ENCODE measurements at regions of chr15 and their contacts with region 1.

Region 1: GRCh38 chr15:32099956-32100684 is 69.8 kb downstream of the CHRNA7 start:
- DNase-seq: no peak
- H3K4me3 ChIP-seq: no peak overlapping the region
- H3K4me1 ChIP-seq: no peaks in the 10 kb centered on the region
- H3K27me3 ChIP-seq: no peaks in the 10 kb centered on the region

Region 2: DNA sequence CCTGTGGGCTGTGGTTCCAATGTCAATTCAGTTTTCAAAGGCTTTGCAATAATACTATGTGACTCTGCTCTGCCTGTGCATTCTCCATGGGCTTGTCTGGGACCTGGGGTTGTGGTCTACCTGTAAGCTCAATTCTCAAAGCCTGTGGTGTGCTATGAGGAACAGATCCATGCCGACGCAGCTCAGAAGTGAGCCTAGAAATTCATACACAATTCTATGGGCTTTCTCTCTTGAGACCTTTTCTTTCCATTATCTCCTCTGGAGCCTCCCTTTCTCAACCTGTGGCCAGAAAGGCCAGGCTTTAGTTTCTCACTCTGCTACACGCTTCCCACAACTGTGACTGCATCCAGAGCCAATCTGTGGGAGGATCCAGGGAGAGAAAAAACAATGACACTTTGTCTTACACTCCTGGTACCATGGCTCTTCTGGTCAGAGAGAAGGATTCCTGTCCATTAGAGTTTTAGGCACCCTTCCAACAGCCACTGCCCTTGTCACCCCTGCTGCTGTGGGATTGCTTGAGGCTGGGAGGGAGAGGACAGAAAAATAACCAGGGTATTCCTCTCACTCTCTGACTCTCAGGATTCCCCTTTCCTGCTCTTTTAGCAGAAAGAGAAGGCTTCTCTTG is 807.6 kb before region 1 on chr15:
- in situ Hi-C with region 1: no loop called
- DNase-seq: no peak
- H3K4me3 ChIP-seq: no peak overlapping the region
- H3K4me1 ChIP-seq: peaks cover 7% of the 10 kb centered on the region
- H3K27me3 ChIP-seq: no peaks in the 10 kb centered on the region; the same call in 1 of the 2 replicates

Region 3: DNA sequence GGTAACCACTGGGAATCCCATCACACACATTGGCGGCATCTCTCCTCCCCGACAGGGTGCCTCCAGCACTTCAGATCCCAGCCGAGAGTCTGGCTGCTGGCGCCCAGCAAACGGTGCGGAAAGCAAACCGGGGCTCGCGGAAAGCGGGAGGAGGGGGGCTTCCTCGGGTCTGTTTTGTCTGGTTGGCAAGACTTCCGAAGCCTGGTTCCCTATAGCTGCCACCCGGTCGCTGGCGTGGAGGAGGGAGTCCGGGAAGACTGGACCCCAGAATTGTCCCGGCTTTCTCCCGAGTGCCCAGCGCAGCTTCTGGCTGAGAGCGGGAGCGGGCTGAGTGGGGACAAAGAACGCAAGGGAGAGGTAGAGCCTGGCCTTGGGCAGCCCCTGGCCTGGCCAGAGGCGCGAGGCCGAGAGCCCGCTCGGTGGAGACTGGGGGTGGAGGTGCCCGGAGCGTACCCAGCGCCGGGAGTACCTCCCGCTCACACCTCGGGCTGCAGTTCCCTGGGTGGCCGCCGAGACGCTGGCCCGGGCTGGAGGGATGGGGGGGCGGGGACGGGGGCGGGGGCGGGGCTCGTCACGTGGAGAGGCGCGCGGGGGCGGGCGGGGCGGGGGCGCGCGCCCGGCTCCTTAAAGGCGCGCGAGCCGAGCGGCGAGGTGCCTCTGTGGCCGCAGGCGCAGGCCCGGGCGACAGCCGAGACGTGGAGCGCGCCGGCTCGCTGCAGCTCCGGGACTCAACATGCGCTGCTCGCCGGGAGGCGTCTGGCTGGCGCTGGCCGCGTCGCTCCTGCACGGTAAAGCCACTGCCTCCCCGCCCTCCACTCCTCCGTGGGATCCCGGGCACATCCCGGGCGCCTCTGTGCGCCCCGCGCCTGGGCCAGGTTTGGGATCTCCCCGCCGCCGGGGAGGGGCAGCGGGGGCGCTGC is 70.0 kb before region 1 on chr15 and contains the start of gene CHRNA7:
- in situ Hi-C with region 1: loop called (anchors 10 kb)
- DNase-seq: peak; percentile 63 to 86
- H3K4me3 ChIP-seq: peak within 1 kb of the TSS; percentile 54
- H3K4me1 ChIP-seq: peaks cover 16% of the 10 kb centered on the region
- H3K27me3 ChIP-seq: no peaks in the 10 kb centered on the region

Region 4: GRCh38 chr15:32130823-32131222 is 30.7 kb after region 1 on chr15:
- in situ Hi-C with region 1: no loop called
- DNase-seq: no peak
- H3K4me3 ChIP-seq: no peak overlapping the region
- H3K4me1 ChIP-seq: no peaks in the 10 kb centered on the region
- H3K27me3 ChIP-seq: no peaks in the 10 kb centered on the region